ENCODE measurements at regions of chr5 and their contacts with region 1.

Region 1: DNA sequence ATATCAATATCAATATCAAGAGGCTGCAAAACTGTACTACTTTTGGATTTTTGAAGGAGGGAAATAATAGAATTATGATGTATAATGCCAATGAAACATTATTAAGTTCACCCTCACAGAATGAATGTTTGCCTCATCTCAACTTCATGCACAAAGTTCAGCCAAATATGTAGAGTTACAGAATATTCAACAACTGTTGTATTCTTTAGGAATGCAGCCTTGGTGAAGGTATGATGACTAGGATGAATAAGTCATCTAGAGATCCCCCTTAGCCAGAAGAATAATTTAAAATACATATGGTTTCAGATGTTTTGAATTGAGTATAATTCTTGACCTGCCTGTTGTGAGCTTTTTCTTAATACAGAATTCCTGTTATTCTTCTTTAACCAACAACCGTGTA is 308.3 kb downstream of the COX7C start:
- DNase-seq: no peak
- ATAC-seq: no peak
- H3K4me3 ChIP-seq: no peak overlapping the region
- H3K4me3 Mint-ChIP-seq: no peak overlapping the region
- H3K27ac ChIP-seq: no peak overlapping the region
- H3K27ac Mint-ChIP-seq: no peak overlapping the region
- H3K4me1 ChIP-seq: no peaks in the 10 kb centered on the region
- H3K4me1 Mint-ChIP-seq: no peaks in the 10 kb centered on the region
- H3K27me3 ChIP-seq: peaks cover 0 to 4% of the 10 kb centered on the region in 2 experiments
- H3K27me3 Mint-ChIP-seq: peaks cover 8% of the 10 kb centered on the region
- CTCF ChIP-seq: no peak

Region 2: DNA sequence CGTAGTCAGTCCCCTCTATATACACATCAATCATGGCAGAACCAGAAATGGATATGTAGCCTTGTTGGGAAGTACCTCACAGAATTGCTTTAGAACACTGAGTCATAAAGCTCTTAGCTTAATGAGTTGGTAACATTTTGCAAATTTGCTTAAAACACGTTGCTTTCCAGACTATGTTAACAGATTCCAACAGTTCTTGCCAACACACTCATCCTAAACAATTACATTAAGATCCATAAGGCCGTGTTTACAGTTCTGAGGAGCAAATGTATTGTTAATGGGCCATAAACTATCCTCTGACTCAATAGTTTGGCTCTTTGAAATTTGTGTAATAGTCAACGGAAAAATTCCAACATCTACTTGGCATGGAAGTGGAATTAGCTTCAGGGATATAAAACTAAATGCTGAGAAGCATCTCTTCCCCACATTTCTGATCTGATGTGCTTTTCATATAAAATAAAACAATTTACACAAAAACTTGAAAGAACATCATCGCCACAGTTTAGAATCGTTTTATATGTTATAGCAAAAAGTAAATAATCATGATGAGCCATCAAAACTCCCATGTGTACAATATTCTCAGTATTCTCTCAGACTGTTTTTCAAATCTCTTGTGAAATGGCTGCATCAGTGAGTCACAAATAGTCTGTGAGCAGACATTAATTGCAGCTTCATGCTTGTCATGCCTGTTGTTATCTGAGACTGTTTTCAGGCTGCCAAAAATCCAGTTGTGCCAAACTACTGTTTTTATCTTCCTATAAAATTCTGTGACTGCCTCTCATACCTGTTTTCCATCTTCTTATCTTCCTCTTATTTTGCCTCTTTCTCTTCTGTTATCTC is 16.4 kb before region 1 on chr5:
- CTCF ChIA-PET with region 1: no interaction called
- POLR2A ChIA-PET with region 1: no interaction called
- intact Hi-C with region 1: loop called in 1 of 2 experiments (anchors 2 kb)
- DNase-seq: no peak
- ATAC-seq: no peak
- H3K4me3 ChIP-seq: no peak overlapping the region
- H3K4me3 Mint-ChIP-seq: no peak overlapping the region
- H3K27ac ChIP-seq: no peak overlapping the region
- H3K27ac Mint-ChIP-seq: no peak overlapping the region
- H3K4me1 ChIP-seq: no peaks in the 10 kb centered on the region
- H3K4me1 Mint-ChIP-seq: no peaks in the 10 kb centered on the region
- H3K27me3 ChIP-seq: no peaks in the 10 kb centered on the region
- H3K27me3 Mint-ChIP-seq: peaks cover 18% of the 10 kb centered on the region
- CTCF ChIP-seq: no peak